ENCODE measurements at regions of chr1 and their contacts with region 1.

Region 1: DNA sequence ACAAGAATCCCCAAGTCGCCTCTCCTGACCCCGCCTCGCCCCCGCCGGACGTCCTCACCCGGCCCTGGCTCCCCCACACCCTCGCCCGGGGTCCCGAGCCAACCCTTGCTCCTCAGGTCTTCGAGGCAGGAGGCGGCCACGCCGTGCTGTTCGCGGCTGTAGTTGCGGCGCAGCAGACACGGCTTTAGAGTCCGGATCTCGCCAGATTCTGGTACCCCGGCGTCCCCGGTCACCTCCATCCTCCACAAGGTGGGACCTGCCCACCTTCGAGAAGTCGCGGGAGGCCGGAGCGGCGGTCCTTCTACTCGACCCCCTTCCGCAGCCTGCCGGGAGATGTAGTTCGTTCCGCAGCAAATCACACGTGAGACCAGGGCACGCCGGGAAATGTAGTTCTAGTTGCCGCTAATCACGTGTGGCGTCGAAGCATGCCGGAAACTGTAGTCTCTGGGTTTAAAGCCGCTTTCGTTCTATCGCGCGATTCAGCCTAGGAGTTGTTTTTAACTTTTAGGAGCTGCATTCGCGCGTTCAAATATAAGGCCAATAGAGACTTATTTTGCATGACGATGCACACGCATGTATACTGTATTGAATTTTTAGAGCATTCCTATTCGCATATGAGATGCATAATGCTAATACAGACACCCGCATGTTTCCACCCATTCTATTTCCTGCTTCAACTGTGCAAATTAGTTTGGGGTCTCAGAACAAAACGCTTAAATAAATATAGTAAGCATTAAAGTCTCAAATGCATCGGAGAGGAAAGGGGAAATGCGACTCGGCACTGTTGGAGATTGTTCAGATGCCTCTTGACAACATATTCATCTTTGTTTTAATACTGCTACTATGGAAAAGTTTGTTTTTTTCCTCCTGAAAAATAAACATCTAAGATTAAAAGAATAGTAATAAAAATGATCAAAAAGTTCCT is at the start of gene DFFA:
- DNase-seq: peak; percentile 77 to 96 (median 87)
- ATAC-seq: peak; percentile 83
- H3K4me3 ChIP-seq: peak within 1 kb of the TSS; percentile 79
- H3K4me3 Mint-ChIP-seq: peak within 1 kb of the TSS; percentile 89
- H3K27ac ChIP-seq: peak within 1 kb of the TSS; percentile 27 to 38
- H3K27ac Mint-ChIP-seq: peak within 1 kb of the TSS; percentile 75
- H3K4me1 ChIP-seq: peaks cover 45% of the 10 kb centered on the region
- H3K4me1 Mint-ChIP-seq: peaks cover 50% of the 10 kb centered on the region
- H3K27me3 ChIP-seq: no peaks in the 10 kb centered on the region
- H3K27me3 Mint-ChIP-seq: no peaks in the 10 kb centered on the region
- CTCF ChIP-seq: no peak
- total RNA-seq, gene DFFA: 7.4 to 9.1 TPM

Region 2: GRCh38 chr1:9428601-9429341 is 1043.7 kb before region 1 on chr1:
- CTCF ChIA-PET with region 1: no interaction called
- POLR2A ChIA-PET with region 1: no interaction called
- intact Hi-C with region 1: loop called in 1 of 2 experiments (anchors 2 kb)
- DNase-seq: peak; percentile 99 to 100 (median 100)
- ATAC-seq: peak; percentile 72
- H3K4me3 ChIP-seq: peak overlapping the region; percentile 66
- H3K4me3 Mint-ChIP-seq: peak overlapping the region; percentile 91
- H3K27ac ChIP-seq: peak overlapping the region; percentile 72 to 82
- H3K27ac Mint-ChIP-seq: peak overlapping the region; percentile 92
- H3K4me1 ChIP-seq: peaks cover 55% of the 10 kb centered on the region
- H3K4me1 Mint-ChIP-seq: peaks cover 56% of the 10 kb centered on the region
- H3K27me3 ChIP-seq: no peaks in the 10 kb centered on the region
- H3K27me3 Mint-ChIP-seq: no peaks in the 10 kb centered on the region
- CTCF ChIP-seq: no peak

Region 3: GRCh38 chr1:10204003-10204642 is 268.4 kb before region 1 on chr1:
- CTCF ChIA-PET with region 1: no interaction called
- POLR2A ChIA-PET with region 1: no interaction called
- intact Hi-C with region 1: no loop called
- DNase-seq: no peak
- ATAC-seq: no peak
- H3K4me3 ChIP-seq: no peak overlapping the region
- H3K4me3 Mint-ChIP-seq: no peak overlapping the region
- H3K27ac ChIP-seq: no peak overlapping the region
- H3K27ac Mint-ChIP-seq: no peak overlapping the region
- H3K4me1 ChIP-seq: no peaks in the 10 kb centered on the region
- H3K4me1 Mint-ChIP-seq: peaks cover under 1% of the 10 kb centered on the region
- H3K27me3 ChIP-seq: peaks cover 0 to 2% of the 10 kb centered on the region in 2 experiments
- H3K27me3 Mint-ChIP-seq: peaks cover 5% of the 10 kb centered on the region
- CTCF ChIP-seq: no peak

Region 4: GRCh38 chr1:10398734-10399623 is 73.5 kb before region 1 on chr1 and contains the start of gene PGD:
- CTCF ChIA-PET with region 1: no interaction called
- POLR2A ChIA-PET with region 1: interaction called, 7 read pairs
- intact Hi-C with region 1: loop called (anchors 1 to 10 kb)
- DNase-seq: peak; percentile 92 to 98 (median 96)
- ATAC-seq: peak; percentile 97
- H3K4me3 ChIP-seq: peak within 1 kb of the TSS; percentile 96
- H3K4me3 Mint-ChIP-seq: peak within 1 kb of the TSS; percentile 98
- H3K27ac ChIP-seq: peak within 1 kb of the TSS; percentile 56 to 70
- H3K27ac Mint-ChIP-seq: peak within 1 kb of the TSS; percentile 79
- H3K4me1 ChIP-seq: peaks cover 21% of the 10 kb centered on the region
- H3K4me1 Mint-ChIP-seq: peaks cover 20% of the 10 kb centered on the region
- H3K27me3 ChIP-seq: no peaks in the 10 kb centered on the region
- H3K27me3 Mint-ChIP-seq: no peaks in the 10 kb centered on the region
- CTCF ChIP-seq: no peak
- total RNA-seq, gene PGD: 16.7 to 17.4 TPM

Region 5: DNA sequence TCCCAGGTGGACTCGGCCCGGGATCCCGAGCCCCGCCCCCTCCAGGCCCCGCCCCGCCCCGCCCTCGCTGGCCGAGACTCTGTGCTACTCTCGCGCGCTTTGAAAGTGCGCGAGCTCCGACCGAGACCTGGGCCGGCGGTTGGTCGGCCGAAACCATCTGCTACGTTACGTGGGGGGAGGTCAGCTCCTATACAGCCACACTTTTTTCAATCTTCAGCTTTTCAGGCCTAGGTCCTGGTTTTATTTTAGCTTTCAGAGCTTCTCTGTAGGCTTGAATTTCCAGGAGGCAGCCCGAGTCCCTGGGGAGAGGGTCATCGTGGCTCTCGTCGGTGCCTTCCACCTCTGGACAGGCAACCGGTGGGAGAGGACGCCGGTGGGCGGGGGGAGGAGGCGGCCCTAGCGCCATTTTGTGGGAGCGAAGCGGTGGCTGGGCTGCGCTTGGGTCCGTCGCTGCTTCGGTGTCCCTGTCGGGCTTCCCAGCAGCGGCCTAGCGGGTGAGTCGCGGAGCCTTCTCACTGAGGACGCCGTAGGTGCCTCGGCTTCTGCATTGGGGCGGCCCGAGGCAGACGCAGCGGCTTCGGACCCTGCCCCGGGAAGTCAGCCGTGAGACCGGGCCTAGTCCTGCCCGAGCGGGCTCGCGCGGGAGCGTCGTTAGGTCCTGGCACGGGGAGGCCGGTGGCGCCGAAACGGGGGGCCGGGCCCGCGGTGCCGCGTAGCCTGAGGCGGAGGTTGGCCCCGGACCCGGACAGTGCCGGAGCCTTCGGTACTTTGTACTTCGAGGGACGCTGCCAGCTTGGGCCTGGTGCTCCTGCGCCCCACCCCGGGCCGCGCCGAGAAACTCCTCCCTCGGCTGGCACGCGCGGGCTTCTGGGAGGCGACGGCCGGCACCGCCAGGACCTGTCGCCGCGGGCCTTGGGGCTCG is 540.0 kb after region 1 on chr1 and contains the start of gene TARDBP:
- CTCF ChIA-PET with region 1: no interaction called
- POLR2A ChIA-PET with region 1: no interaction called
- intact Hi-C with region 1: loop called in 1 of 2 experiments (anchors 5 kb)
- DNase-seq: peak; percentile 80 to 95 (median 88)
- ATAC-seq: peak; percentile 85
- H3K4me3 ChIP-seq: peak within 1 kb of the TSS; percentile 85
- H3K4me3 Mint-ChIP-seq: peak within 1 kb of the TSS; percentile 94
- H3K27ac ChIP-seq: peak within 1 kb of the TSS; percentile 91 to 99
- H3K27ac Mint-ChIP-seq: peak within 1 kb of the TSS; percentile 98
- H3K4me1 ChIP-seq: peaks cover 44% of the 10 kb centered on the region
- H3K4me1 Mint-ChIP-seq: peaks cover 34% of the 10 kb centered on the region
- H3K27me3 ChIP-seq: no peaks in the 10 kb centered on the region
- H3K27me3 Mint-ChIP-seq: no peaks in the 10 kb centered on the region
- CTCF ChIP-seq: no peak
- total RNA-seq, gene TARDBP: 141 to 149 TPM

Region 6: GRCh38 chr1:12229835-12230548 is 1757.5 kb after region 1 on chr1 and contains the start of gene VPS13D:
- CTCF ChIA-PET with region 1: no interaction called
- POLR2A ChIA-PET with region 1: no interaction called
- intact Hi-C with region 1: loop called in 1 of 2 experiments (anchors 5 kb)
- DNase-seq: peak; percentile 74 to 93 (median 82)
- ATAC-seq: peak; percentile 95
- H3K4me3 ChIP-seq: peak within 1 kb of the TSS; percentile 98
- H3K4me3 Mint-ChIP-seq: peak within 1 kb of the TSS; percentile 94
- H3K27ac ChIP-seq: peak within 1 kb of the TSS in 1 of 2 donors; percentile 50
- H3K27ac Mint-ChIP-seq: peak within 1 kb of the TSS; percentile 83
- H3K4me1 ChIP-seq: peaks cover 24% of the 10 kb centered on the region
- H3K4me1 Mint-ChIP-seq: peaks cover 27% of the 10 kb centered on the region
- H3K27me3 ChIP-seq: no peaks in the 10 kb centered on the region
- H3K27me3 Mint-ChIP-seq: no peaks in the 10 kb centered on the region
- CTCF ChIP-seq: peak; percentile 85
- total RNA-seq, gene VPS13D: 63.0 to 67.3 TPM

Measured in CD4-positive, alpha-beta T cell (primary cell).